Mammary epithelial cell (primary cell): ENCODE measurements at regions of chr3 and their contacts with region 1.

Region 1: DNA sequence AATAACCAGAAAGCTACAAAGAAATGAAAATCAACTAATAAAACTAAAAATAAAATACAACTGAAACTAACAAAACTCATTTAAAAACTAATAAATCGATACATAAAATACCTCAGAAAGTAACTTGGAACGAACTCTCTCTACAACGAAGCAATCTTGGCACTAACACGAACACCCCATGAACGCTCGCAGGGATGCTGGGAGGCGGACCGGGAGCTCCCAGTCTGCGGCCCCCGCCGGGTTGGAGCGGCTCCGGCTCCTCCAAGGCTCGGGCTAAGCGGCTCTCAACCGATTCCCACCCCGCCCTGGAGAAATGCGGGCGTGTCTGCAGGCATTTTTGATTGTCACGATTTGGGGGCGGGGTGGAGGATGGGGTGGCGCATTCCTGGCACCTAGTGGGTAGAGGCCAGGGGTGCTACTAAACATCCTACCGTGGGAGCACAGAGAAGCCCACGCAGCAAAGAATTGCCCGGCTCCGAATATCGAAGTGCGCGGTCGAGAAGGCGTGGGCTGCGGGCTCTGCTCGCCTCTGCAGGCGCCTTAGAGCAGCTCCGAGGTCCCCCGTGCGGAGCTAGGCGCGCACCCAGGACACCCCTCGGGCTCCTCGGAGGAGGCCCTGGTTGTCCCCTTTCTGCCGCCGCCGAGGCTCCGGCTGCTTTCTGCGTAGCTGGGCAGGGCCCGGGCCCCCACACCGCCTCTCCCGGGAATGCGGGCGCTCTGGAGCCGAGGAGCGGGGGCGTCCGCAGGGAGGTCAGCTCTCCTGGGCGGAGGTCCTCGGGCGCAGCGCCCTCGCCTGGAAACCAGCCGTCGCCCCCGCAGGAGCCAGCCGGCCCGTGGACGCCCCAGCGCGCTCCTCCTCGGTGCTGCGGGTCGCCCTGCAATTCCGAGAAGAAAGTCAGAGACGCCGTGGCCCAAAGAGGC is 16.4 kb upstream of the LAMP3 start:
- DNase-seq: peak; percentile 46
- H3K4me3 ChIP-seq: peak overlapping the region; percentile 55 to 62 (median 60)
- H3K27ac ChIP-seq: no peak overlapping the region
- H3K4me1 ChIP-seq: peaks cover 4% of the 10 kb centered on the region
- H3K27me3 ChIP-seq: no peaks in the 10 kb centered on the region
- CTCF ChIP-seq: peak in 1 of 2 donors; percentile 26

Region 2: DNA sequence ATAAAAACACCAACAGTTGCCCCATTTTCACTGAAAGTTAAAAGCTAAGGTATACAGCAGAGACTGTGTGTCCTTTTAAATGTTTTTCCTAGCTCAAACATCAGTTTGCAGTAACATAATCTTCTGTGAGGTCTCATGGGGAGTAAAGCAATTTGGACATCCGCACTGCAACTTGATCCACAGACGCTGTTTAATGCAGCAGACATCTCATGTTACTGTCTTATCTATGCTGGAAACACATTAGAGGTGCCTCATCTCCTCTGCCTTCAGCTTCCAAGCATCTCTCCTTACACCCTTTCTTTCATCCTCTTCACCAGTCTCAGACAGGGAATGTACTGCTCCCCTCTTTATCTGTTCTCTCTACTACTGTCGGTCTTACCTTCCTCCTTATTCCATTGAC is 439.3 kb before region 1 on chr3:
- CTCF ChIA-PET with region 1: no interaction called
- dilution Hi-C with region 1: no loop called
- in situ Hi-C with region 1: no loop called
- intact Hi-C with region 1: no loop called
- DNase-seq: no peak
- H3K4me3 ChIP-seq: no peak overlapping the region
- H3K27ac ChIP-seq: no peak overlapping the region
- H3K4me1 ChIP-seq: peaks cover 18% of the 10 kb centered on the region
- H3K27me3 ChIP-seq: no peaks in the 10 kb centered on the region
- CTCF ChIP-seq: no peak

Region 3: GRCh38 chr3:182869059-182869458 is 309.8 kb before region 1 on chr3:
- CTCF ChIA-PET with region 1: no interaction called
- dilution Hi-C with region 1: no loop called
- in situ Hi-C with region 1: no loop called
- intact Hi-C with region 1: no loop called
- DNase-seq: no peak
- H3K4me3 ChIP-seq: no peak overlapping the region
- H3K27ac ChIP-seq: no peak overlapping the region
- H3K4me1 ChIP-seq: no peaks in the 10 kb centered on the region
- H3K27me3 ChIP-seq: no peaks in the 10 kb centered on the region
- CTCF ChIP-seq: no peak

Region 4: DNA sequence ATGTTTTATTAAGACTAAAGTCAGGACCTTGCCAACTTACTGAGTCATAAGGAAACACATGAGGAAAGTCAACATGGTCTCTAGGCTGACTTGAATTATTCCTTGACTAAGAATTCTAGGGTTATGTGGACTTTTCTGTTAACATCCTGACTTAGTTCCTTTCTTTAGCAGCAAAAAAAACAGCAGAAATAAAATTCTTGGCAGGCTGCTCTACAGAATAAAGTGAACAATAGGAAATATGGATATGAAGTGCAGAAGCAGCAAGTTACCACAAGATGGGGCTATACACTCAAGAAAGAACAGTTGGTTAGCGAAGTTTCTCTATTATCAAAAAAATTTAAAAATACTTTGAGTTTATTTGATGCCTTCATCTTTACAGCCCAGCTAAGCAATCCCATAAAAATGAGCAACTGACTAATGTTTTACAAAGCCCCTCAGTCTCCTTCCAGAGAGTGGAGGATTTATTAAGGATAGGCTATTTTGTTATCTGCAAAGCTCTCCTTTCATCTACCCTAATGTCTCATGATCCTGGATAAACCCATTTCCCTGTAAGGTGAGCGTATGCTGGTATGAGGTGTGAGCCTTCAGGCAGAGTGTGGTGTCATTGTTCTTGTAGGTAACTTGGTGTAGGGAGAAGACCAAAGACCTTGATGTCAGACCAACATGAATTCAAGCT is 56.5 kb before region 1 on chr3:
- CTCF ChIA-PET with region 1: no interaction called
- dilution Hi-C with region 1: no loop called
- in situ Hi-C with region 1: no loop called
- intact Hi-C with region 1: loop called (anchors 1 kb)
- DNase-seq: peak; percentile 28
- H3K4me3 ChIP-seq: no peak overlapping the region
- H3K27ac ChIP-seq: no peak overlapping the region
- H3K4me1 ChIP-seq: peaks cover 5% of the 10 kb centered on the region
- H3K27me3 ChIP-seq: no peaks in the 10 kb centered on the region
- CTCF ChIP-seq: peak; percentile 75 to 84

Region 5: GRCh38 chr3:183218826-183219225 is 39.9 kb after region 1 on chr3:
- CTCF ChIA-PET with region 1: no interaction called
- dilution Hi-C with region 1: loop called (anchors 5 kb)
- in situ Hi-C with region 1: no loop called
- intact Hi-C with region 1: no loop called
- DNase-seq: no peak
- H3K4me3 ChIP-seq: no peak overlapping the region
- H3K27ac ChIP-seq: no peak overlapping the region
- H3K4me1 ChIP-seq: no peaks in the 10 kb centered on the region
- H3K27me3 ChIP-seq: no peaks in the 10 kb centered on the region
- CTCF ChIP-seq: no peak

Region 6: DNA sequence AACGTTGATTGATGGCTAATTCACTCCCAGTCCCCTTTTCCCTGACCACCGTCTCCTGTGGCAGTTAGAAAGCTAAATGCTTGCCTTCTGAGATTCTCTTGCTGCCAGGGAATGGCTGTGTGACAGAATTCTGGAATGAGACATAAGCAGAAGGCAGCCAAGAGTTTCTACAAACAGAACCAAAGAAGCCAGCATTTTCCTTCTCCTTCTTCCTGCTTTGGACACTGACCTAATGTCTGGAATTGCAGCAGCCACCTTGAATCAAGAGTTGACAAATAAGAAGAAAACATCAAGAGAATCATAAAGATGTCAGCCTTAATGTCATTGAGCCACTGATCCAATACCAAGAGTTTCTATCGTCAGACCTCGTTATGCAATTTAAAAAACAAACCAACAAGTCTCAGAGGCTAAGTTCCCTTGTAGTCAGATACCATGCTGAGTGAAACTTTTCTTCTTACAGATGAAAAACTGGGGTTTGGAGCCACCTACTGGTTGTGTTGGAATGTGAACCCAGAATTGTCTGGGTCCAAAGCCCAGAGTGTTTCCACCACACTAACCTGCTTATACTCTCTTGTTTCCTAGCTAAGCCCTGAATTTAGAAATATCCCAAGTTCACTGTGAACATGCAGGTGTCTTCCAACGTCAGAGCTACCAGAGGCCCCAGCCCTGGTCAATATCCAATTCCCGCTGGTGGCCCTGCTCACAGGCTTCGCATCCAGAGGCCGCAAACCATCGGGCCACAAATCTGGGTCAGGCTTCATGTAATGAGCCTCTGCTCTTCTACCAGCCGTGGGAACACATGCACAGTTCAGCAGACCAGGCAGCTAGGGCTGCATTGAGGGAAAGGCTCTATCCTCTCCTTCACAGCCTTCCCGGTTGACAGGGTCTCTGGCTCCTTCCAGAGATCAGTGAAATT is 207.1 kb after region 1 on chr3:
- CTCF ChIA-PET with region 1: no interaction called
- dilution Hi-C with region 1: no loop called
- in situ Hi-C with region 1: loop called (anchors 5 kb)
- intact Hi-C with region 1: loop called (anchors 1 kb)
- DNase-seq: peak; percentile 59
- H3K4me3 ChIP-seq: no peak overlapping the region
- H3K27ac ChIP-seq: no peak overlapping the region
- H3K4me1 ChIP-seq: peaks cover 8% of the 10 kb centered on the region
- H3K27me3 ChIP-seq: no peaks in the 10 kb centered on the region
- CTCF ChIP-seq: peak; percentile 72 to 80

Region 7: GRCh38 chr3:183560607-183561006 is 381.7 kb after region 1 on chr3:
- CTCF ChIA-PET with region 1: no interaction called
- dilution Hi-C with region 1: no loop called
- in situ Hi-C with region 1: no loop called
- intact Hi-C with region 1: loop called (anchors 5 kb)
- DNase-seq: peak; percentile 36
- H3K4me3 ChIP-seq: no peak overlapping the region
- H3K27ac ChIP-seq: no peak overlapping the region
- H3K4me1 ChIP-seq: peaks cover 4% of the 10 kb centered on the region
- H3K27me3 ChIP-seq: no peaks in the 10 kb centered on the region
- CTCF ChIP-seq: peak in 1 of 2 donors; percentile 58